ENCODE measurements at regions of chr6 and their contacts with region 1.

Region 1: DNA sequence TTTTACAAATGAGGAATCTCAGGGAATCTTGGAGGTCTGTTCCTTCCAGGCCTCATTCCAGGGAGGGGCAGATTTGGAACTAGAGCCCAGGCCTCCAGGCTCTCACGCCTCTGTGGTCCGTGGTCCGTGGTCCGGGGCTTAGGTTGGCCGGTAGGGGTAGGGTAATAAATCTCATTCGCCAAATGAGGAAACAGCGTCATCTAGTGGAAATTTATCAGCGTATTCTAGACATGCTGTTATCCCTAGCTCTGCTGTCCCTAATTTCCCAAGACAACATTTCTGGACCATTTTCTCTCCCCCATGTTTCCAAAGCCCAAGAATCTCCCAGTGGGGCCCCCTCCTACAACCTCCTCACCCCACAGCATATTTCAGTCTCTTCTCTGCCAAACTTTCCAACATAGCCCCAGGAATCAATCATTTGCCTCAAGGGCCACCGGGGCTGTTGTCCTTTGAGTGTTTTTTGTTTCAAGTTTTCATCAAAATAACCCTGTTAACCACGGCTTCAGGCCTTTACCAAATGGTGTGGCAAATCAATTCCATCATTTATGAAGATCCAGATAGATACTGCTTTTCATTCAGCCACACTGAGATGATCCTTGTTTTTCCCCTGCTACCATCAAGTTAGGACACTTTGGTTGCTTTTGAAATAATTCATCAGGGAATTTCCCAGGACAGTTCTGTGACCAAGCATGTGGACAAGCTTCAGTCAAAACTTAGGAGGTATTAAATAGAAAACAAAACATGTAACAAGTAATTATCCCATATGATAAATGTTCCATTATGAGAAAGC is 126.8 kb downstream of the ALDH8A1 start:
- DNase-seq: peak; percentile 81
- H3K4me3 Mint-ChIP-seq: no peak overlapping the region
- H3K27ac Mint-ChIP-seq: peak overlapping the region; percentile 16
- H3K4me1 Mint-ChIP-seq: peaks cover 6% of the 10 kb centered on the region
- H3K27me3 Mint-ChIP-seq: peaks cover 3% of the 10 kb centered on the region

Region 2: DNA sequence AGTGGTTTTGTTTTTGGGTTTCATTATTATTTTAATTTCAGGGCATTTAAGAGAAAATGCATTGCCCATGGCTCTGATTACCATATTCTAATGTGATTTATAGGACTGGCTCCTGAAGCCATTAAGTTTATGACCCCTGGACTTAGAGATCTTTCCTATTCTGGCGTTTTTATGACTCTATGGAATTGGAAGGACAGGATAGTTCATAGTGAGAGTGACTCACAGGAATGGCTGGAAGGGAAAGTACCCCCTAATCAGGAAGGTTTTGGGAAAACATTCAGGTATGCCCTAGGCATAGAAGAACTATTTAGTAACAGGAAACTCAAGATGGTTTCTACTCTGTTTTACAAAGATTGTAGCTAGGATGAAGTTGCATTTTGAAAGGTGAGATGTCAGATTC is 662.1 kb before region 1 on chr6:
- intact Hi-C with region 1: loop called (anchors 1 kb)
- DNase-seq: no peak
- H3K4me3 Mint-ChIP-seq: no peak overlapping the region
- H3K27ac Mint-ChIP-seq: no peak overlapping the region
- H3K4me1 Mint-ChIP-seq: no peaks in the 10 kb centered on the region
- H3K27me3 Mint-ChIP-seq: peaks cover 2% of the 10 kb centered on the region